ENCODE measurements at regions of chr18 and their contacts with region 1.

Region 1: DNA sequence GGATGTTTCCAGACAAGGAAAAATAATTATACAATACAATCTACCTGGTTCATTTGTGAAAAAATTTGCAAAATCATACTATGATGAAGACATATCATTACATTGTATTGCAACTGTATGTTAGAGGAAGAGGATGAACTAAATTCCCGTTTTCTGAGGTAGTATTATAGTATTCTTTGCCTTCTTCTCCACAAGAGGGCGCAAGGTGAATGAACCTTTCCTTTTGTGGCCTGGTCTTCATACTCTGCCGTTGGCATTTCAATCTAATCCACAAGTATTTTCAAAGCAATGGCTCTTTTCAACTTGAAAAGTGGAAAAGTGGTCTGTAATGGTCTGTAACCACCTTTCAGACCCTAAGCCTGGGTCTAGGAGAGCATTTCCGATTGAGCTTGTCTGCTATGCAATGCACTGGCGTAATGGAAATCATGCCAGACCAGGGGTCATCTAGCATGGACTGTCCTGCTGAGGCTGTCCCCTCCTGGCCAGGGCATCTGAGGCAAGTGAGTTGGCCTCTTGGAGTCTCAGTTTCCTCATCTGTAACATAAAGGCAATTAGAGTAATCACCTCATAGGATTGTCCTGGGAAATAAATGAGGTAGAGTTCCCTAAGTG is 30.8 kb upstream of the ZNF396 start:
- DNase-seq: peak in 6 of 9 experiments; percentile 10 to 75 (median 41)
- ATAC-seq: peak; percentile 81
- H3K4me3 ChIP-seq: no peak overlapping the region
- H3K4me3 Mint-ChIP-seq: no peak overlapping the region
- H3K27ac ChIP-seq: no peak overlapping the region
- H3K27ac Mint-ChIP-seq: no peak overlapping the region
- H3K4me1 ChIP-seq: peaks cover 6% of the 10 kb centered on the region
- H3K4me1 Mint-ChIP-seq: peaks cover 11% of the 10 kb centered on the region
- H3K27me3 ChIP-seq: no peaks in the 10 kb centered on the region
- H3K27me3 Mint-ChIP-seq: no peaks in the 10 kb centered on the region
- CTCF ChIP-seq: peak; percentile 91

Region 2: GRCh38 chr18:35127201-35127600 is 280.8 kb before region 1 on chr18:
- CTCF ChIA-PET with region 1: no interaction called
- POLR2A ChIA-PET with region 1: no interaction called
- intact Hi-C with region 1: no loop called
- DNase-seq: peak in 1 of 9 experiments; percentile 16
- ATAC-seq: no peak
- H3K4me3 ChIP-seq: no peak overlapping the region
- H3K4me3 Mint-ChIP-seq: no peak overlapping the region
- H3K27ac ChIP-seq: no peak overlapping the region
- H3K27ac Mint-ChIP-seq: no peak overlapping the region
- H3K4me1 ChIP-seq: peaks cover 13% of the 10 kb centered on the region
- H3K4me1 Mint-ChIP-seq: peaks cover 23% of the 10 kb centered on the region
- H3K27me3 ChIP-seq: no peaks in the 10 kb centered on the region
- H3K27me3 Mint-ChIP-seq: no peaks in the 10 kb centered on the region
- CTCF ChIP-seq: no peak

Region 3: GRCh38 chr18:35368595-35368994 is 39.4 kb before region 1 on chr18:
- CTCF ChIA-PET with region 1: no interaction called
- POLR2A ChIA-PET with region 1: no interaction called
- intact Hi-C with region 1: no loop called
- DNase-seq: no peak
- ATAC-seq: no peak
- H3K4me3 ChIP-seq: no peak overlapping the region
- H3K4me3 Mint-ChIP-seq: no peak overlapping the region
- H3K27ac ChIP-seq: no peak overlapping the region
- H3K27ac Mint-ChIP-seq: no peak overlapping the region
- H3K4me1 ChIP-seq: no peaks in the 10 kb centered on the region
- H3K4me1 Mint-ChIP-seq: no peaks in the 10 kb centered on the region
- H3K27me3 ChIP-seq: no peaks in the 10 kb centered on the region
- H3K27me3 Mint-ChIP-seq: peaks cover 3% of the 10 kb centered on the region
- CTCF ChIP-seq: no peak

Region 4: GRCh38 chr18:35386600-35387351 is 21.2 kb before region 1 on chr18:
- CTCF ChIA-PET with region 1: interaction called, 5 read pairs
- POLR2A ChIA-PET with region 1: no interaction called
- intact Hi-C with region 1: loop called in 1 of 2 experiments (anchors 1 kb)
- DNase-seq: peak; percentile 18 to 88 (median 64)
- ATAC-seq: peak; percentile 99
- H3K4me3 ChIP-seq: no peak overlapping the region
- H3K4me3 Mint-ChIP-seq: no peak overlapping the region
- H3K27ac ChIP-seq: no peak overlapping the region
- H3K27ac Mint-ChIP-seq: no peak overlapping the region
- H3K4me1 ChIP-seq: no peaks in the 10 kb centered on the region
- H3K4me1 Mint-ChIP-seq: peaks cover 2% of the 10 kb centered on the region
- H3K27me3 ChIP-seq: peaks cover 0 to 4% of the 10 kb centered on the region in 2 experiments
- H3K27me3 Mint-ChIP-seq: peaks cover 19% of the 10 kb centered on the region
- CTCF ChIP-seq: peak; percentile 96

Region 5: DNA sequence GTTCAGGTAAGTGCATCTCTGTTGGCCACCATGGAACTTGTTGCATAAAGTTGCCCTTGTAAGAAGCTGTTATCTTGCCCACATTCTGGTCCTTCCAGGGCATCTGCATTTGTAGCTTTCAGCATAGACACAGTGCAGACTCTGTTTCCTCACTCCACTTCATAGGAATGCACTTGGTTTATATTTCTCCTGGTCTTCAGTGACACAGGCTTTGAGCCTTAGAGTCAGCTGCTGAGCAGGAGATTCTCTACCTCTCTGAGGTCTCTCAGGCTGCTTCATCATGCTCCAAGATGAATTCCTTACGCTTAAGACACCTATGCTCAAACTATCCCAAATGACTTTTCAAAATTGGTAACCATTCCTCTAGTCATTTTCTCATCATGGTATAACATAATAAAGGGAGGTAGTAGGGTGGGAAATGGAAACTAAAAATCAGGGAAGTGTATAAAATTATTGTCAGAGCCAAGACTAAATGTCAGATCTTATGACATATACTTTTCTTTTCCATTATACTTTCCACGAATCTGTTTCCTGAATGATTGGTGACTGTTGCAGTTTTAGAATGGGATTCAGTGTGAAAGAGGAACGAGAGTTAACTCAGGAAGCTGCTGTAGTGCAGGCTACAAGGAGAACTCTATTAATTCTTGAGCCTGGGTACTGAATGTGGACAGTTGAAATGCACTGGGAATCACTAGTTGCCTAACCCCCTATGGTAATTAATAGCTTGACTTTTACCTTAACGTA is 245.6 kb after region 1 on chr18:
- CTCF ChIA-PET with region 1: no interaction called
- POLR2A ChIA-PET with region 1: no interaction called
- intact Hi-C with region 1: loop called in 1 of 2 experiments (anchors 5 kb)
- DNase-seq: no peak
- ATAC-seq: no peak
- H3K4me3 ChIP-seq: no peak overlapping the region
- H3K4me3 Mint-ChIP-seq: no peak overlapping the region
- H3K27ac ChIP-seq: no peak overlapping the region
- H3K27ac Mint-ChIP-seq: no peak overlapping the region
- H3K4me1 ChIP-seq: no peaks in the 10 kb centered on the region
- H3K4me1 Mint-ChIP-seq: peaks cover 25% of the 10 kb centered on the region
- H3K27me3 ChIP-seq: no peaks in the 10 kb centered on the region
- H3K27me3 Mint-ChIP-seq: no peaks in the 10 kb centered on the region
- CTCF ChIP-seq: no peak

Region 6: DNA sequence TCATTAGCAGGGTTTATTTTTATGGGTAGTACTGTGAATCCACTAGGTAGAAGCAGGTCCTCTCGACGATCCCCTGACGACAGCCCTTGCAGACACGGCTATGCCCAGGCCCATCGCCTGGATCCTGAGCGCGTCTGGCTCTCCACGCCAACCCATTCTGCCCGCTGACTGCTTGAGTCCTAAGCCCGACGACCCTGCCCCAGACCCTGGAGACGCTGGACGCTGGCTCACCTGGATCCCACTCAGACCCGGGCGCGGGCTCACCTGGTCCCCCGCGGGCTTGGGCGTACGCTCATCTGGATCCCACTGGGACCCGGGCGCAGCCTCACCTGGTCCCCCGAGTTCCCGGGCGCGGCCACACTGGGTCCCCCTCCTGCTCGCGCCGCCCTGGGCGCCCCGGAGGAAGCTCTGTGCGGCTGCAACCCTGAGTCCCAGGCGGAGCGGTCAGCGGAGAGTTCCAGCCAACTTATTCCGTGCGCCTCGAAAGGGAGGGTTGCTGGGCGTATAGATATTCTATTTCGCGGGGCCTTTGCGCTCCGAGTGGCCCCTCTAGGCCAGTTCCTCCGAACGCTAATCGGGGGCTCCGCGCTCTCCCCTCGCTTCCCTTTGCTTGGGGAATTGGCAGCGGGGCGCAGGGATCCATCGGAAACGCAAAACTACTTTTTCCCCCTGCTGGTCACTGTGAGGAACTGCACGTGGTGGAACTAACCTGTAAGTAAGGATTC is 542.1 kb after region 1 on chr18:
- CTCF ChIA-PET with region 1: interaction called, 5 read pairs
- POLR2A ChIA-PET with region 1: no interaction called
- intact Hi-C with region 1: loop called in 1 of 2 experiments (anchors 5 kb)
- DNase-seq: peak; percentile 18 to 77 (median 55)
- ATAC-seq: peak; percentile 93
- H3K4me3 ChIP-seq: peak overlapping the region; percentile 53 to 70
- H3K4me3 Mint-ChIP-seq: peak overlapping the region; percentile 86
- H3K27ac ChIP-seq: no peak overlapping the region
- H3K27ac Mint-ChIP-seq: no peak overlapping the region
- H3K4me1 ChIP-seq: no peaks in the 10 kb centered on the region
- H3K4me1 Mint-ChIP-seq: no peaks in the 10 kb centered on the region
- H3K27me3 ChIP-seq: peaks cover 5 to 6% of the 10 kb centered on the region in 2 experiments
- H3K27me3 Mint-ChIP-seq: peaks cover 19% of the 10 kb centered on the region
- CTCF ChIP-seq: peak; percentile 96

Measured in CD8-positive, alpha-beta T cell (primary cell).